GM12878 (cell line): ENCODE measurements at regions of chr2 and their contacts with region 1.

Region 1: DNA sequence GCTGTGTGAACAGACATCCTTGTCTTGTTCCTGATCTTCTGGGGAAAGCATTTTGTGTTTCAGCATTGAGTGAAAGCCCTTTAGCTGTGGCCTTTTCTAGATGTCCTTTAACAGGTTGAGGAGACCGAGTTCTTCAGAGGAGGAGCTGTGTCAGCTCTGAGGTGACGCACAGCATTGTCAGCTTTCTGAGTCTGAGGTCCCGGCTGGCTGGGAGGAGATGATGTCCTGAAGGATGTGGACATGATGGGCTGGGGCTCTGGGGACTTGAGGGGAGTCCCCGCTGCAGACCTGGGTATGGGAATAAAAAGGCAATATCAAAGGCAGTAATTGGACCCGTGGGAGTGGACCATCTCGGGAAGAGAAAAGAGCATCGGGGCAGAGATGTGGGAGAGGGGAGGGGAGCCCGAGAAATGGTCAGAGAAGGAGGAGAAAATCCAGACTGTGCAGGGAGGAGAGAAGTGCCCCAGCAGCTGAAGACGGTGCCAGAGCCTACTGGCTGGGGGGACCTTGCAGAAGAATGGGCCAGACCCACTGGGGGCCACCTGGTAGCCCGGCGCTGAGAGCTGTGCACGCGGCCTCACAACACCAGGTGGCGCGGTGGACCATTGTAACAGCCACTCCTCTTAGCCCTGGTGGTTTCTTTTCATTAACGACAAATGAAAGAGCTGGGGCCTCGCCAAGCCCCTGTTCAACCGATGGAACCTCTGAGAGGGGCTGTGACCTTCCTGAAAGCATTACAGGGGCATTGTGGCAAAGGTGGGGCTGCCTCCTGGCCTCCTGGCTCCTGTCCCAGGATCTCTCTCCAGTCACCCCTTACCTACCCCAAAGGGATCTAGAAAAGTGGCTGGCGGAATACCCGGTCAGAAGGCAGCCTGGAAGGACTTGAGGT is 61.6 kb downstream of the ST3GAL5 start:
- DNase-seq: no peak
- ATAC-seq: peak; percentile 98
- H3K4me3 ChIP-seq: no peak overlapping the region
- H3K27ac ChIP-seq: no peak overlapping the region
- H3K4me1 ChIP-seq: no peaks in the 10 kb centered on the region
- H3K27me3 ChIP-seq: no peaks in the 10 kb centered on the region; a peak in 1 of 4 replicates
- CTCF ChIP-seq: peak; percentile 77 to 89 (median 88); a peak in 5 of 6 replicates
- EP300 ChIP-seq: no peak
- POLR2A ChIP-seq: no peak
- RAD21 ChIP-seq: peak; percentile 85

Region 2: DNA sequence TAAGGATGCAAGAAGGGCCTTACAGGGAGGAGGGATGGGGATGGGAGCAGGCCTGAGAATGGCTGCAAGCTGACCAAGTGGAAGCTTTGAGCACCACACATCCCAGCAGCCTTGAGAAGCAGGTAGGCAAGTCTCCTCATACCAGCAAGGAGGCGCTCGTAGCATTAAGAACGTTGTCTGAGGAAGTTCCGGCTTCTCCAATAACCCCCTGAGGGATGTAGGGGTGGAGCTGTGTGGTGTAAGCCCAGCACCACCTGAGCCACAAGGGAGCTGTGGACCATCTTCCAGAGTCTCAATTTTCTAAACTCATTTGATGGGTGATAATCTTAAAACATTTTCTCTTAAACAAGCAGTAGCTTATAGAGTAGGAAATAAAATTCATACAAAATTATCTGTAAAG is 10.9 kb after region 1 on chr2:
- CTCF ChIA-PET with region 1: interaction called, 20 read pairs
- POLR2A ChIA-PET with region 1: no interaction called
- RAD21 ChIA-PET with region 1: interaction called, 5 read pairs
- SMC1A ChIA-PET with region 1: interaction called, 5 read pairs
- in situ Hi-C with region 1: no loop called
- intact Hi-C with region 1: no loop called
- DNase-seq: no peak
- ATAC-seq: no peak
- H3K4me3 ChIP-seq: no peak overlapping the region
- H3K27ac ChIP-seq: no peak overlapping the region
- H3K4me1 ChIP-seq: peaks cover 9% of the 10 kb centered on the region
- H3K27me3 ChIP-seq: no peaks in the 10 kb centered on the region
- CTCF ChIP-seq: no peak
- EP300 ChIP-seq: no peak
- POLR2A ChIP-seq: no peak
- RAD21 ChIP-seq: no peak

Region 3: GRCh38 chr2:85865539-85866164 is 38.4 kb after region 1 on chr2:
- CTCF ChIA-PET with region 1: interaction called, 9 read pairs
- POLR2A ChIA-PET with region 1: no interaction called
- RAD21 ChIA-PET with region 1: interaction called, 8 read pairs
- SMC1A ChIA-PET with region 1: interaction called, 14 read pairs
- in situ Hi-C with region 1: no loop called
- intact Hi-C with region 1: loop called (anchors 2 kb)
- DNase-seq: peak; percentile 62
- ATAC-seq: peak; percentile 90
- H3K4me3 ChIP-seq: no peak overlapping the region; the same call in 1 of the 2 replicates
- H3K27ac ChIP-seq: no peak overlapping the region
- H3K4me1 ChIP-seq: peaks cover 24% of the 10 kb centered on the region
- H3K27me3 ChIP-seq: no peaks in the 10 kb centered on the region
- CTCF ChIP-seq: no peak
- EP300 ChIP-seq: peak in 1 of 2 experiments; percentile 58; a peak in 1 of 4 replicates
- POLR2A ChIP-seq: no peak
- RAD21 ChIP-seq: peak; percentile 7; the same call in 1 of the 2 replicates

Region 4: DNA sequence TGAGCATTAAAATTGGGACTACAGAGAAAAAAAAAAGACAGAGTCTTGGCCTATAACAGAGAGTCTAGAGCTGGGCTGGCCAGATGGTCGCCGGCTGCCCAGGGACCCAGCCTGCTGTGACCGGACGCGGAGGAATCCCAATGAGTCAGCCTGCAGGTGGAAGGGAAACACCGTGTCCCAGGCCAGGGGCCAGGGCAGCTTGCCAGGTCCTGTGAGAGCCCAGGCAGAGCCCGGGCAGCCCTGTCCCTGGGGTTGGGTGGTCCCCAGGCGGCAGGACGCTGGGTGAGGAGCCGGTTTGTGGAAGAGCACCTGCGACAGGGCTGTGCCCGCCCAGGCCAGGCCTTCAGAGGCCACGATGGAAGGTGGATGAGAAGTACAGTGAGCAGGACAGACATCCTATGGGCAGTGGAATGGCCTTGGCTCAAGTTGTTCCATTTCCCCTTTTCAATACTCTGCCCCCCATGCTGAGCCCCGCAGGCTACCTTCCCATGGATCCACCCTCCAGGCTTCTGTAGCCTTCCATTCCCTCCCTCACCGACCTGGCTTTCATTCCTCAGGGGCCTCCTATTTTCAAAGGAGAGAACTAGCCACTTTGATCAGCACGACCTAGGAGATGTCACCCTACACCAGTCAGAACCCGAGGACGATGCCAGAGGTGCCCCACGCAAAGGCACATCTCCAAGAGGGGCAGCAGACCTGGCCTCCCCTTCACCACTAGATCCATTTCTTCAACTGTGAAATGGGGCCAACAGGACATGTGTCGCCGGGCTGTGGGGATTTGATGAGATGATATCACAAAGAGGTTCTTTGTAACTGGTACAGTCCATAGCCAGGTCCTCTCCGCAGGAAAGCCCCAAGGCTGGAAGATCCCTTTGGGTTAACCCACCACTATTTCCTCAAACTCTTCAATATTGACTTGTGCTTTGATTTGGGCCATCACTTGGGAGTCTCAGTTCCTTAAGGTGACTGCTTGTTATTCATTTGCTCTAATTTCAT is 191.0 kb after region 1 on chr2:
- CTCF ChIA-PET with region 1: interaction called, 15 read pairs
- POLR2A ChIA-PET with region 1: no interaction called
- RAD21 ChIA-PET with region 1: interaction called, 19 read pairs
- SMC1A ChIA-PET with region 1: interaction called, 21 read pairs
- in situ Hi-C with region 1: no loop called
- intact Hi-C with region 1: no loop called
- DNase-seq: no peak
- ATAC-seq: peak; percentile 71
- H3K4me3 ChIP-seq: no peak overlapping the region
- H3K27ac ChIP-seq: peak overlapping the region; percentile 60
- H3K4me1 ChIP-seq: peaks cover 20% of the 10 kb centered on the region
- H3K27me3 ChIP-seq: no peaks in the 10 kb centered on the region
- CTCF ChIP-seq: no peak
- EP300 ChIP-seq: peak; percentile 22 to 68; a peak in 1 of 4 replicates
- POLR2A ChIP-seq: no peak
- RAD21 ChIP-seq: no peak

Region 5: DNA sequence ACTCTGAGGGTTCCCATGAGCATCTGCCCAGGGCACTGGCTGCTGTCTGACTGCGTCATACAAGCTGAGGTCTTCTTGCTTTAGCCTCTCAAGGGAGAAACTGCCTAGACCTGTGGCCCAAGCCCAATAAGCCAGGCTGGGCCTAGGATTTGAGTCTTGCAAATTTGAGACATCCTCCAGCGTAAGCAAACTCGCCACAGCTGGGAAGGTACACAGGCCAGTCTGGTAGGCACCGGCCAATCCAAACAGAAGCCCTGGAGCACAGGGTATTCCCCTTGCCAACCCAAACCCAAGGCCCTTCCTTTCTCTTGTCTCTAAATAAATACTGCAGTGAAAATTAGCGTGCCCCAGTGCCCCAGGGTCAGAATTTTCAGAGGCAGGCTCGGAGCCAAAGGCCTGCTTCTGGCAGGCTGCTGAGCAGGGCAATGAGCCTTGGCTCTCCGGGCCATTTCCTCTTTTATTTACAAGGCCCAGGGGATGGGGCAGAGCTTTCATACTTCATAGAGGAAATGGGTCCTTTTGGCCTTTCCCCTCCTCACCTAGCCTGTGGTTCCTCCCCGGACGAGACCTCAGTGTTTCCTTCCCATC is 245.1 kb after region 1 on chr2:
- CTCF ChIA-PET with region 1: interaction called, 458 read pairs
- POLR2A ChIA-PET with region 1: interaction called, 7 read pairs
- RAD21 ChIA-PET with region 1: interaction called, 214 read pairs
- SMC1A ChIA-PET with region 1: interaction called, 286 read pairs
- in situ Hi-C with region 1: loop called (anchors 5 kb)
- intact Hi-C with region 1: no loop called
- DNase-seq: no peak
- ATAC-seq: peak; percentile 92
- H3K4me3 ChIP-seq: no peak overlapping the region
- H3K27ac ChIP-seq: peak overlapping the region; percentile 51
- H3K4me1 ChIP-seq: peaks cover 6% of the 10 kb centered on the region
- H3K27me3 ChIP-seq: no peaks in the 10 kb centered on the region
- CTCF ChIP-seq: no peak
- EP300 ChIP-seq: no peak
- POLR2A ChIP-seq: no peak
- RAD21 ChIP-seq: no peak